ENCODE measurements at regions of chr11 and their contacts with region 1.

Region 1: GRCh38 chr11:10933455-10934292 is 75.8 kb upstream of the ZBED5 start:
- DNase-seq: peak; percentile 61
- H3K4me3 Mint-ChIP-seq: peak overlapping the region; percentile 76
- H3K27ac Mint-ChIP-seq: peak overlapping the region; percentile 65
- H3K4me1 Mint-ChIP-seq: peaks cover 22% of the 10 kb centered on the region
- H3K27me3 Mint-ChIP-seq: peaks cover 64% of the 10 kb centered on the region

Region 2: GRCh38 chr11:10792398-10792975 is 141.2 kb before region 1 on chr11:
- intact Hi-C with region 1: loop called (anchors 1 kb)
- DNase-seq: peak; percentile 74
- H3K4me3 Mint-ChIP-seq: peak overlapping the region; percentile 1
- H3K27ac Mint-ChIP-seq: no peak overlapping the region
- H3K4me1 Mint-ChIP-seq: peaks cover 21% of the 10 kb centered on the region
- H3K27me3 Mint-ChIP-seq: peaks cover 25% of the 10 kb centered on the region

Region 3: DNA sequence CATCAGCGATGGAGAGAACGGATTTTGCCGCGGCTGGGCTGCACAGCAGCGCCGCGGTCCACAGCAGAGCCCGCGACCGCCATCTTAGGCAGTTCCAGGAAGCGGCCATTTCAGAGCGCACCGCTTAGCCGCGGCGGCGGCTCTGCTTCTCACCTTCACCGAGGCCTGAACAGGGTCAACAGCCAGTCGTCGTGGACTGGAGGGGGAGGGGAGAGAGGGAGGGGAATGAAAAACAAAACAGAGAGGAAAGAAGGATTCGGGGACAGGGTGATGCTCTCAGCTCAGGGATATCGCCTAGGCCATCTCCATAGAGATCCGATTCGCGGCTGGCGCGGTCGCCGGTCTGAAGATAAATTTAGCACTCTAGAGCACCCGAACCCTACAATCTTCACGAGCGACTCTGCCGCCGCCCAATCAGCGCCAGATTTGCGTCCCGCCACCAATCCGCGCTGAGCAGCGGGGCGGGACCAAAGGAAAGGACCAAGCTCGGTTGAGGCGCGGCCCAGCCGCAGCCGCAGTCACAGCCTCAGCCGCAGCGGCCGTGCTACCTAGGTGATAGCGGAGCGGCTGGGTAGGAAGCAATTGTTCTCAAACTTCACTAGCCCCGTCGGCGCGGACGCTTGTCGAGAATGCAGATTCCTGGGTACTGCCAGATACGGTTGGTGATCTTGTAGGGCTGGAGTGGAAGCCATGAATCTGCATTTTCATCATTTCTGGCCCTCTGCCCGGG is 75.8 kb before region 1 on chr11 and contains the start of gene ZBED5:
- intact Hi-C with region 1: loop called (anchors 1 kb)
- DNase-seq: peak; percentile 94
- H3K4me3 Mint-ChIP-seq: peak within 1 kb of the TSS; percentile 100
- H3K27ac Mint-ChIP-seq: peak within 1 kb of the TSS; percentile 100
- H3K4me1 Mint-ChIP-seq: peaks cover 46% of the 10 kb centered on the region
- H3K27me3 Mint-ChIP-seq: no peaks in the 10 kb centered on the region
- total RNA-seq, gene ZBED5: 38.9 and 42.2 TPM in 2 replicates

Region 4: DNA sequence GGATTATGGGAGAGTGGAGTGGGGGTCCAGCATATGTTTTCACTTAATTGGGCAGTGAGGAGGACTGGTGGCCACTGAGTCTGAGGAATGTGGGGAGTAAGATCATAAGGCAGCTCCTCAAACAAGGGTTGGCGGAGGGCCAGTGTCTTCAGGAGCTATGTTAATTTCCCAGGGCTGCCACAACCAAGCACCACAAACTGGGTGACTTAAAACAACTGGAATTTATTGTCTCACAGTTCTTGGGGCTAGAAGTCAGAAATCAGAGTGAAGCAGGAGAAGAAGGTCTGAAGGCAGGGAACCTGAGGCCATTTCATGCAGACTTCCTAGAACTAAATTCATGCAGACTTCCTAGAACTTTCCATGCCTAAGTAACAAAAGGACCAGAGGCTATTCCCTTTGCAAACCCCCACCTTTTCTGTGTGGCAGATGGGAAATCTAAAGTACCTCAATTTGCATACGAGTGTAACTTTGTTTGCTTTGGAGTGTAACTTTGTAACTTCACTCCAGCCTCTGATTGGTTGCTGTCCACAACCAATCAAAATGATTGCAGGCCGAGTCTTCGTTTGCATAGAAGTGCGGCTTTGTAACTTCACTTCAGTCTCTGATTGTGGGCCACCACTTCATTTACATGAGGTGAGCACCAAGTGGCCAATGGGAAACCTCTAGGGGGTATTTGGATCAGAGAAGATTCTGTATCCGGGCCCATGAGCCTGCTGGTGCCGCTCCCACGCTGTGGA is 25.3 kb before region 1 on chr11:
- intact Hi-C with region 1: no loop called
- DNase-seq: no peak
- H3K4me3 Mint-ChIP-seq: no peak overlapping the region
- H3K27ac Mint-ChIP-seq: no peak overlapping the region
- H3K4me1 Mint-ChIP-seq: no peaks in the 10 kb centered on the region
- H3K27me3 Mint-ChIP-seq: peaks cover 8% of the 10 kb centered on the region

Region 5: GRCh38 chr11:11022125-11022730 is 88.6 kb after region 1 on chr11:
- intact Hi-C with region 1: loop called (anchors 1 kb)
- DNase-seq: no peak
- H3K4me3 Mint-ChIP-seq: no peak overlapping the region
- H3K27ac Mint-ChIP-seq: no peak overlapping the region
- H3K4me1 Mint-ChIP-seq: no peaks in the 10 kb centered on the region
- H3K27me3 Mint-ChIP-seq: peaks cover 10% of the 10 kb centered on the region

Region 6: DNA sequence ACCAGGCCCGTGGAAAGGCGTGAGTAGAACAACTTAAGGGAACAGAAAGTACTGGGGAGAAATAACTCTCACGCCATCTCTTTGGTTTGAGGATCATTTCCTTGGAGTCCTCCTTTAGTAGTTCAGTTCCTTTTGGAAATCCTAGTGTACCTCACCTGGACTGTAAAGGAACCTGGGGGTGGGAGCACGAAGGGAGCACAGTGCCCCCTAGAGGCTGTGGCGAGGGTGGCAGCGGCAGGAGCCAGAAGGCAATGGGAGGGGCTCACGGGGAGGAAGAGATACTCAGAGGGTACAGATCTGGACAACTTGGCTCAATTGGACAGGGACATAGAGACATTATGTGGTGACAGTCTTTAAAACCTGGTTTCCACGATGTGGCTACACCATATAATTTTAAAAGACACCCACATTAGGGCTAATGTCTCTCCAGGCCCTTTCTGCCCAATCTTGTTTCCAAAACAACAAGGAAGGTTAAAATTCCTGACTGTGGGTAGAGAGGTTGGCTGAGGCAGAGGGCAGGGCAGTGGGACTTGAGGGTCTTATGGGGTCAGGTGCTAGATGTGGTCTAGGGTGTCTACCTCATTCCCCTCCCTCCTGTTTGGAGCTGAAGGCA is 332.4 kb after region 1 on chr11:
- intact Hi-C with region 1: loop called (anchors 2 kb)
- DNase-seq: peak; percentile 45
- H3K4me3 Mint-ChIP-seq: no peak overlapping the region
- H3K27ac Mint-ChIP-seq: no peak overlapping the region
- H3K4me1 Mint-ChIP-seq: no peaks in the 10 kb centered on the region
- H3K27me3 Mint-ChIP-seq: peaks cover 2% of the 10 kb centered on the region

Region 7: DNA sequence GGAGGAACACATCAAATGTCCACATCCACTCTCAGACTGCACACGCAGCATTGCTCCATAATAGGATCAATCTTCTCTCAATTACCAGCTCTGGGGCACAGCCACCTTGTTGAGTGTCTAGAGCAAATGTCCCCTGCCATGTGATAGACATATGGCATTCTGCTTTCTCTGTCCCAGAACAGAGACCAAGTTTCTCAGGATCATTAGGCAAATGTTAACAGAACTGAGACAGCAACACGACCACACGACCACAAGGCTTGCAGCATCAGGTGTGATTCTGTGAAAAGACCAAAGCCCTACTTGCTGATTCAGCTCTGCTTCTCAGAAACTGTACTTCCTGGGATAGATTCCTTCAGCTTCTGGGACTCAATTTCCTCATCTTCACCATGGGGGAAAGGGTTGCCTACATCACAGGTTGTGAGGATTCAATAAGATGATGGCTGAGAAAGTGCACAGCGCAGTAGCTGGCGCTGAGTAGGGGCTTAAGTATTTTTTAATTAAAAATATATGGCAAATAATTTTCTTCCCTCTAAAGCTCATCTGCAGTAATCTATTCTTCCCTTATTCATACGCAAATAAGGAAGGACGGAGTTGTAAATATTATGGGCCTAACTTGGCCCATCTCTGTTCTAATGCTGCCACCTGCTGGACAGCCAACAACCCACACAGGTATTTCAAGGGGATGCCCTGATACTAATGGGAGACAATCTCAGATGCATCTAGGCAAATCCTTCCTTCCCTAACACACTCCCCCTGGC is 853.8 kb after region 1 on chr11:
- intact Hi-C with region 1: loop called (anchors 1 kb)
- DNase-seq: peak; percentile 36
- H3K4me3 Mint-ChIP-seq: no peak overlapping the region
- H3K27ac Mint-ChIP-seq: no peak overlapping the region
- H3K4me1 Mint-ChIP-seq: no peaks in the 10 kb centered on the region
- H3K27me3 Mint-ChIP-seq: peaks cover 20% of the 10 kb centered on the region